Caco-2 (cell line): ENCODE measurements at regions of chr5 and their contacts with region 1.

Region 1: DNA sequence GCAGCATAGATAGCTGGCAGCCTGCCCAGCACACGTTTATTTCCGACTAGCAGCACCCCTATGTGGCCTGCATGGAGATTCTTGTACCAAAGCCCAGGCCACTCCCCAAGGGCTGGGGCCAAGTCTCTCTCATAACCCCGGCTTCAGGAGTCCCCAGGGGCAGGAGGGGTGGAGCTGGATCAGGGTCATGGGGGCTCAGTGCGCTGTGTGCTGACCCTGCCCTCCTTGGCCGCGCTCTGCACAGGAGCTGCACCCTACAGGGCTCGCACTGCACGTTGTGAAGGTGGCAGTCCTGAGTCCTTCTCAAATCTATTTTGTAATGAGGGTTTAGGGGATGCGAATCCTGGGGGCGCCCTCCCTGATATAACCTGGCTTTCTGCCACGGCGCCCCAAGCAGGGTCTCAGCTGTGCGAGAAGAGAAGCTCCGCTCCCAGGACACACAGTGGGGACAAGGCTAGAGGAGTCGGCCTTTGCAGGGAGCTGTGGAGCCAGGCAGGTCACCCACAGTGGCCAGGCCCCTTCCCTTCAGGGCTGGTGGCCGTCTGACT is 28.6 kb downstream of the NKD2 start:
- DNase-seq: no peak
- H3K4me3 ChIP-seq: no peak overlapping the region
- H3K4me3 Mint-ChIP-seq: no peak overlapping the region
- H3K27ac Mint-ChIP-seq: no peak overlapping the region
- H3K4me1 ChIP-seq: no peaks in the 10 kb centered on the region
- H3K4me1 Mint-ChIP-seq: no peaks in the 10 kb centered on the region
- H3K27me3 ChIP-seq: no peaks in the 10 kb centered on the region
- H3K27me3 Mint-ChIP-seq: no peaks in the 10 kb centered on the region
- CTCF ChIP-seq: no peak

Region 2: GRCh38 chr5:989961-990530 is 47.2 kb before region 1 on chr5:
- CTCF ChIA-PET with region 1: no interaction called
- POLR2A ChIA-PET with region 1: no interaction called
- intact Hi-C with region 1: no loop called
- DNase-seq: peak in 1 of 2 experiments; percentile 58
- H3K4me3 ChIP-seq: no peak overlapping the region
- H3K4me3 Mint-ChIP-seq: no peak overlapping the region
- H3K27ac Mint-ChIP-seq: no peak overlapping the region
- H3K4me1 ChIP-seq: peaks cover 7% of the 10 kb centered on the region; the same call in 1 of the 2 replicates
- H3K4me1 Mint-ChIP-seq: peaks cover 8% of the 10 kb centered on the region
- H3K27me3 ChIP-seq: no peaks in the 10 kb centered on the region
- H3K27me3 Mint-ChIP-seq: no peaks in the 10 kb centered on the region
- CTCF ChIP-seq: peak; percentile 10 to 73

Region 3: DNA sequence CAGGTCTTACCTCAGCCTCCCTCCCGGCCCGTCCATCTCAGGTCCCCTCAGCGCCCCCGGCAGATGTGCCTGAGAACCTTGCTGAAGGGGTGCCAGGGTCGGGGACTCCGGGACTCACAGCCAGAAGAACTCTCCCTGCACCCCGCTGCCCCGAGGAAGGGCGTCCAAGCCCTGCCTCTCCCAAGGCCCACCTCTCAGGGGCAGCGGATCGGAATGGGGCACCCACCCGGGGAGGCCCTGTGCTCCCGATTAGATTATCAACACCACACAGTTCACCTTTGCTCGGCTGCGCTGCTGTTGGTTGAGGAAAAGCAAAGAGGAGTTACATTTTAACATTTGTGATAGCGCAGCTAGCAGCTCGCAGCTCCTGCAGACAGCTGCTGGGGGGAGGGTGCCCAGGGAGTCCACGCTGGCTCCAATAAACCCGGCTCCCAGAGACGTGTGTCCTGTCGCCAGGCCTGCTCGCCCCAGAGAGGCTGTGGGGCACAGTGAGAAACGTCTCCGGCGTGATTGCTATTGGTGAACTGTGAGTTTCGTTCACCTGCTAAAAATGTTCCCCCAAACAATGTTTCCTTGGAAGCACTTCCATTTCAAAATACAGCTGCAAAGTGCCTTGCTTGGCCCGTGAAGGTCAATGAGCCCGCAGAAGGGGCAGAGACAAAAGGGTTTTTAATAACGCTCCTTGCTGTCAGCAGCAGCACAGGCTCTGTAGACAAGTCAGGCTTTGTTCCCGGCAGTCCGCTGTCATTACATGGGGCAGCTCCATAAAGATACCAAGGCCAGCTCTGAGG is 145.6 kb after region 1 on chr5:
- CTCF ChIA-PET with region 1: interaction called, 11 read pairs
- POLR2A ChIA-PET with region 1: no interaction called
- intact Hi-C with region 1: no loop called
- DNase-seq: peak; percentile 75 to 89
- H3K4me3 ChIP-seq: peak overlapping the region; percentile 23
- H3K4me3 Mint-ChIP-seq: peak overlapping the region; percentile 61
- H3K27ac Mint-ChIP-seq: peak overlapping the region; percentile 75
- H3K4me1 ChIP-seq: peaks cover 74% of the 10 kb centered on the region
- H3K4me1 Mint-ChIP-seq: peaks cover 16% of the 10 kb centered on the region
- H3K27me3 ChIP-seq: no peaks in the 10 kb centered on the region
- H3K27me3 Mint-ChIP-seq: no peaks in the 10 kb centered on the region
- CTCF ChIP-seq: no peak

Region 4: GRCh38 chr5:1204693-1205242 is 167.6 kb after region 1 on chr5:
- CTCF ChIA-PET with region 1: no interaction called
- POLR2A ChIA-PET with region 1: no interaction called
- intact Hi-C with region 1: no loop called
- DNase-seq: peak; percentile 68 to 72
- H3K4me3 ChIP-seq: no peak overlapping the region
- H3K4me3 Mint-ChIP-seq: no peak overlapping the region
- H3K27ac Mint-ChIP-seq: no peak overlapping the region
- H3K4me1 ChIP-seq: peaks cover 44% of the 10 kb centered on the region
- H3K4me1 Mint-ChIP-seq: no peaks in the 10 kb centered on the region
- H3K27me3 ChIP-seq: no peaks in the 10 kb centered on the region
- H3K27me3 Mint-ChIP-seq: no peaks in the 10 kb centered on the region
- CTCF ChIP-seq: peak; percentile 55 to 84